ENCODE measurements at regions of chr4 and their contacts with region 1.

Region 1: GRCh38 chr4:1910643-1911042 is 39.5 kb downstream of the NSD2 start:
- DNase-seq: peak; percentile 35
- H3K4me3 ChIP-seq: no peak overlapping the region
- H3K27ac ChIP-seq: no peak overlapping the region
- H3K4me1 ChIP-seq: peaks cover 3% of the 10 kb centered on the region
- CTCF ChIP-seq: peak; percentile 74

Region 2: DNA sequence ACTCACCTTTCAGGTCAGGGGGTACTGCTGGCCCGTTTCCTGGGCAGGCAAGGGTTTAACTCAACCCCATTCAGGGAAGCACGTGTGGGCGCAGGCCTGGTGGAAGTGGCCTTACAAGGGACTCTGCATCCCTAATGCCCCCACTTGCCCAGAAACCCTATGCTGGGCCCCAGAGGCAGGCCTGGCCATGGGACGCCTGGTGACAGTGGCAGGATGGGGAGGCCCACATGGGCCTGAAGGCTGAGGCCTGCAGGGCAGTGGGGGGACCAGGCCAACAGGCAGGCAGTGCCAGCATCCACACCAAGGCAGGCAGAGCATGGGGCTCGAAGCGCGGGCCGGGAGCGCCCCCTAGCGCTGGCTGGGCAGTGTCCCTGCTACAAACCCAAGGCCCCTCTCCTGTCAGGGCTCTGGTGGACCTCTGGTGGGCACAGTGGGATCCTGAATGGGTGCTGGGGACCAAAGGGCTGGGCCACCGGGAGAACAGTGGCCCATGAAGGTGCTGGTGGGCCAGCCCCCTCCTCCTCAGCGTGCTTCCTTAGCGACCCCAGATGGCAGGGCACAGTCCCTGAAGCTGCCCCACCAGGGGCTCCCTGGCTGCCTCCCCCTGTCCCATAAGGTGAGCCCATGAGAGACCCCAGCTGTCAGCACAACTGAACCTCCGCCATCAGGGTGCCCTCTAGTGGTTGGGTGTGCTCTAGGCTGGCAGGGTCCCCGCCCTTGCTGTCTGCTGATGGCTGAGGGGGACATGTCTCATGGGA is 100.7 kb before region 1 on chr4:
- CTCF ChIA-PET with region 1: no interaction called
- POLR2A ChIA-PET with region 1: no interaction called
- intact Hi-C with region 1: no loop called
- DNase-seq: peak; percentile 72
- H3K4me3 ChIP-seq: no peak overlapping the region
- H3K27ac ChIP-seq: no peak overlapping the region
- H3K4me1 ChIP-seq: peaks cover 5% of the 10 kb centered on the region
- CTCF ChIP-seq: peak; percentile 89

Region 3: GRCh38 chr4:1928356-1929239 is 18.0 kb after region 1 on chr4:
- CTCF ChIA-PET with region 1: no interaction called
- POLR2A ChIA-PET with region 1: interaction called, 10 read pairs
- intact Hi-C with region 1: no loop called
- DNase-seq: no peak
- H3K4me3 ChIP-seq: no peak overlapping the region
- H3K27ac ChIP-seq: no peak overlapping the region
- H3K4me1 ChIP-seq: no peaks in the 10 kb centered on the region
- CTCF ChIP-seq: no peak

Measured in OCI-LY7 (cell line).